Dendritic cell treated with granulocyte-macrophage colony-stimulating factor and Interleukin-4, amounts not matched to agents 40 ng/mL and 50 ng/mL, for 4 days (primary cell): ENCODE measurements at regions of chr4 and their contacts with region 1.

Region 1: GRCh38 chr4:11436673-11437072 is 8.0 kb upstream of the HS3ST1 start:
- H3K4me3 Mint-ChIP-seq: no peak overlapping the region
- H3K27ac Mint-ChIP-seq: no peak overlapping the region
- H3K4me1 Mint-ChIP-seq: peaks cover 27% of the 10 kb centered on the region
- H3K27me3 Mint-ChIP-seq: peaks cover 5% of the 10 kb centered on the region

Region 2: DNA sequence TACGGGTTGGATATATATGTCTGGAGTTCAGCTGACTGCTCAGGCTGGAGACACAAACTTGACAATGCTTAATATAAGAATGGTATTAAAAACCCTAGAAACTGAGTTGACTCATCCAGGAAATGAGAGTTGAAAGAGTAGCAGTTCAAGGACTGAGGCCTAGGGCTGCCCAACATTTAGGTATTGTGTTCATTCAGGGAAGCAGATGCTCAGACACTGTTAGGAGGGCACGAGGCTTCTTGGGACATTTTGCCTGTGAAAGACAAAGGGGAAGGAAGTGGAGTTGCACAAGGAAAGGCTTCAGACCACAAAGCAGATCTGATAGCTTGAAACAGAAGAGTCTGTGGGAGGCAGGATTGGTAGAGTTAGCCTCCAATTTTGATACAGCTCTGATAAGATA is 44.0 kb after region 1 on chr4:
- intact Hi-C with region 1: loop called (anchors 5 kb)
- H3K4me3 Mint-ChIP-seq: no peak overlapping the region
- H3K27ac Mint-ChIP-seq: no peak overlapping the region
- H3K4me1 Mint-ChIP-seq: peaks cover 8% of the 10 kb centered on the region
- H3K27me3 Mint-ChIP-seq: no peaks in the 10 kb centered on the region

Region 3: DNA sequence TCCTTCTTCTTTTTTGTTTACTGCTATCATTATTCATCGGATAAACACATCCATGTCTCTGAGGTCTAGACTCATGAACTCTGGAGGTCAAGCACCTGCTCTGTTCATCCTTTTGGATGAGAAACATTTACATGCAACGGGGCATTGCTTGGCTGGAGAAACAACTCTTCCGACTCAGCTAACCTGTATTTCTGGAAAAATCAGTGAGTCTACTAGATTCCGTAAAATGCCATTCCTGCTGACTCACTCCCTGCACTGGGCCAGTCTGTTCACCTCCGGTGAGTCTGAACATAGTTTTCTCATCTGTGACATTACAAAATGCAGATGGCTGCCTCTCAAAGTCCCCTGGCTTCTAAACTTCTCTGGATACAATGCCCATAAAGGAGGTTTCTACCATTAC is 177.7 kb after region 1 on chr4:
- intact Hi-C with region 1: loop called (anchors 10 kb)
- H3K4me3 Mint-ChIP-seq: no peak overlapping the region
- H3K27ac Mint-ChIP-seq: no peak overlapping the region
- H3K4me1 Mint-ChIP-seq: peaks cover 23% of the 10 kb centered on the region
- H3K27me3 Mint-ChIP-seq: no peaks in the 10 kb centered on the region